PC-3 (cell line): ENCODE measurements at regions of chrX and their contacts with region 1.

Region 1: GRCh38 chrX:68936608-68937007 is 107.8 kb downstream of the EFNB1 start:
- DNase-seq: peak; percentile 78
- ATAC-seq: peak; percentile 87
- H3K4me3 ChIP-seq: no peak overlapping the region
- H3K27ac ChIP-seq: 0 out of 2 replicates have a peak overlapping the region, but pooled peaks have one; percentile 11
- H3K4me1 ChIP-seq: peaks cover 28% of the 10 kb centered on the region
- H3K27me3 ChIP-seq: no peaks in the 10 kb centered on the region
- CTCF ChIP-seq: no peak

Region 2: DNA sequence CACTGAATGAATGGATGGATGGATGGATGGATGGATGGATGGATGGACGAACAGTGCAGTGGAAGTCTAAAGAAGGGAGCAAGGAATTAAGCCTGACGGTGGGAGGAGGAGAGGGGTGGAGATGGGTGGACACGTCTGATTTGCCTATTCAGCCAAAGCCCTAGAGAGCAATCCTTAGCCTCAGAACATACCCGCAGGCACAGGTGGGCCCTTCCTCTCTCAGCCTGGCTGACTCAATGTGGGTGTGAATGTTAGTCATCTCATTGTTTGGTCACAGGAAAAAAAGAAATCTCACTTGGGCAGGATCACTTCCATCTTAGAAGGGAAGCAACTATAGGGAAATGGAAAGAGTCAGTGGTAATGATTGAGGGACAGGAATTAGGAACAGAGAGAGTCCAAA is 62.7 kb after region 1 on chrX:
- CTCF ChIA-PET with region 1: no interaction called
- POLR2A ChIA-PET with region 1: no interaction called
- intact Hi-C with region 1: loop called (anchors 2 kb)
- DNase-seq: peak; percentile 92
- ATAC-seq: peak; percentile 96
- H3K4me3 ChIP-seq: no peak overlapping the region
- H3K27ac ChIP-seq: peak overlapping the region; percentile 93
- H3K4me1 ChIP-seq: peaks cover 34% of the 10 kb centered on the region
- H3K27me3 ChIP-seq: no peaks in the 10 kb centered on the region
- CTCF ChIP-seq: no peak